Activated T-helper 1 cell treated with anti-CD3 and anti-CD28 coated beads, Interleukin-12 subunit alpha, Interleukin-12 subunit beta, Interleukin-2, Interleukin-4 antibody, amounts not matched to agents 30 ng/mL and 10 ng/mL and 1 ng/mL, durations not matched to agents 14 hours and 24 hours and 36 hours (primary cell): ENCODE measurements at regions of chr19 and their contacts with region 1.

Region 1: DNA sequence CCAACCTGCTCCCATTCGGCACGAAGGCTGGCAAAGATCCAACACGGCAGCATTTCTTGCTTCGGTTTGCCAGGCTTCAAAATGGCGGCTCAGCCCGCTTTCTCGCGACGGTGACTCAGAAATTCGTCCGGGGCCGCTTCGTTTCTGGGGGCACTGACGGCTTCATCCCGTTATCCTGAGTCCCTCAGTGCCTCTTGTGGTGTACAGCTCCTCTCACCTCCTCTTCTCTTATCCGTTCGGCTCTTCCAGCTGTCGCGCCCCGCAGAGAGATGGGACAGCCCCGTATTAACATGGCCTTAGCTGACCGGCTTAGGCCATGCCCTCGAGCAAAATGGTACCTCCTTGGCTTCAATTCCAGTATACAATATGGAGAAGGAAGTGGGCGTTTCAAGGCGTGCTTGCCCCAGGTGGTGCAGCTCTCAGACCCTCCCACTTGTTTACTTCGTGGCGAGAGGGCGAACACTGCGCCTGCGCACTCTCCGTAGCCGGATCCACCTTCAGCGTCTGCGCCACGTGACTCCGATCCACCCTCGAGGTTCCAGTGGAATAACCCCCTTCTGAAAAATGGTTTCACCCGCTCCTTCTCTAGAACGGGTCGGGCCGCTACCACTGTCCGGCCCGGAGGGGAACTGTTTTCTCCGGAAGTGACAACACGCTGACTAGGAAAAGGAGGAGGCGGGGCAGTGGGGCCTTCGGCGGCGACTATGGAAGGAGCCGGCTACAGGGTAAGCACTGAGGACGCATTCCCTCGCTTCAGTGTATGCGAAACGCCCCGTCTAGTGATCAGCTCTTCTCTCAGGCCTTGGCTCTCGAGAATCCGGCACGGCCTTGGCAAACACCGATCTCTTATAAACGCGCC is at the starts of genes AKT1S1 and TBC1D17:
- DNase-seq: peak; percentile 99
- H3K4me3 Mint-ChIP-seq: no peak within 1 kb of the TSS
- H3K27ac Mint-ChIP-seq: no peak within 1 kb of the TSS
- H3K4me1 Mint-ChIP-seq: peaks cover 30% of the 10 kb centered on the region
- H3K27me3 Mint-ChIP-seq: no peaks in the 10 kb centered on the region
- total RNA-seq, gene AKT1S1: 32.1 and 32.2 TPM in 2 replicates
- total RNA-seq, gene TBC1D17: 38.7 and 41.8 TPM in 2 replicates

Region 2: GRCh38 chr19:49676690-49677231 is 200.5 kb before region 1 on chr19:
- intact Hi-C with region 1: loop called (anchors 1 kb)
- DNase-seq: peak; percentile 98
- H3K4me3 Mint-ChIP-seq: peak overlapping the region; percentile 95
- H3K27ac Mint-ChIP-seq: peak overlapping the region; percentile 99
- H3K4me1 Mint-ChIP-seq: peaks cover 41% of the 10 kb centered on the region
- H3K27me3 Mint-ChIP-seq: no peaks in the 10 kb centered on the region

Region 3: DNA sequence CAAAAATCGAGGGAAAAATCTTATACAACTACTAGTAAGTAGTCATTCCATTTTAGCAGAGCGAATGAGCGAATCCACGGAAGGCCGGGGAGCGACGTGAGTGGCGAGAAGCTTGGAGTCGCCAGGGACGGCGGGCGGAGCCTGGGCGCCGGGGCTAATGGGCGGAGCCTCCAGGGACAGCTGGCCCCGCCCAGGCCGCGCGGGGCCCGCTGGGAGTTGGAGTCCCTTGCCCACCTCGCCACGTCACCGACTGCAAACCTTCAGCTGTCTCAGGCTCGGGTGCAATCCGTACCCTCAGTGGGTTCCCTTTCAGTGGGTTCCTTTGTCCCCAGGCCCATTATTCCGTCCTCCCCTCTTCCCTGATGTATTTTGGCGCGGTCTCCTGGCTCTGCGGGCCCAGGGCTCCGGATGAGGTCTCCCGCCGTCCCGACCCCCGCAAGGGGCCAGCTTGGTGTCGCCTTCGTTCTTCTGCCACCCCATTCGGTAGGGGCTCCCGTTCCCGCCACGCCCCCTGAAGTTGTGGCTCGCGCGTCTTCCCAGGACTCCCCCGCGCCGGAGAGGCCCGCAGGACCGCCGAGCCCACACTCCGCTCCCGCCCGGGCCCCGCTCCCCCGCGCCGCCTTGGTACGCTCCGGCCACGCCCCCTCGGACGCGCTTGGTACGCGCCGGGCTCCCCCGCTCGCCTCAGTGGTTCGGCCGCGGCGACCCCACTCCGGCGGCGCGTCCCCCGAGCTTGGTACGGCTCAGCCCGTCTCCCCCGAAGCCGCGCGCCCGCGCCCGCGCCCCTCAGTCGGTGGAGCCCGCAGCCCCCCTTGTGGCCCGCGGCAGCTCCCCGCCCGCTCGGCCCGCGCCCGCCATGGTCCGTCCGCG is 26.5 kb before region 1 on chr19 and contains the start of gene PTOV1:
- intact Hi-C with region 1: loop called (anchors 1 kb)
- DNase-seq: peak; percentile 88
- H3K4me3 Mint-ChIP-seq: peak within 1 kb of the TSS; percentile 89
- H3K27ac Mint-ChIP-seq: peak within 1 kb of the TSS; percentile 92
- H3K4me1 Mint-ChIP-seq: peaks cover 38% of the 10 kb centered on the region
- H3K27me3 Mint-ChIP-seq: peaks cover 5% of the 10 kb centered on the region
- total RNA-seq, gene PTOV1: 107 and 113 TPM in 2 replicates

Region 4: GRCh38 chr19:49862376-49863253 is 14.6 kb before region 1 on chr19:
- intact Hi-C with region 1: no loop called
- DNase-seq: no peak
- H3K4me3 Mint-ChIP-seq: peak overlapping the region; percentile 4
- H3K27ac Mint-ChIP-seq: no peak overlapping the region
- H3K4me1 Mint-ChIP-seq: peaks cover 20% of the 10 kb centered on the region
- H3K27me3 Mint-ChIP-seq: no peaks in the 10 kb centered on the region

Region 5: GRCh38 chr19:49911381-49912145 is 34.3 kb after region 1 on chr19:
- intact Hi-C with region 1: loop called (anchors 1 kb)
- DNase-seq: no peak
- H3K4me3 Mint-ChIP-seq: peak overlapping the region; percentile 75
- H3K27ac Mint-ChIP-seq: peak overlapping the region; percentile 96
- H3K4me1 Mint-ChIP-seq: peaks cover 63% of the 10 kb centered on the region
- H3K27me3 Mint-ChIP-seq: no peaks in the 10 kb centered on the region

Region 6: DNA sequence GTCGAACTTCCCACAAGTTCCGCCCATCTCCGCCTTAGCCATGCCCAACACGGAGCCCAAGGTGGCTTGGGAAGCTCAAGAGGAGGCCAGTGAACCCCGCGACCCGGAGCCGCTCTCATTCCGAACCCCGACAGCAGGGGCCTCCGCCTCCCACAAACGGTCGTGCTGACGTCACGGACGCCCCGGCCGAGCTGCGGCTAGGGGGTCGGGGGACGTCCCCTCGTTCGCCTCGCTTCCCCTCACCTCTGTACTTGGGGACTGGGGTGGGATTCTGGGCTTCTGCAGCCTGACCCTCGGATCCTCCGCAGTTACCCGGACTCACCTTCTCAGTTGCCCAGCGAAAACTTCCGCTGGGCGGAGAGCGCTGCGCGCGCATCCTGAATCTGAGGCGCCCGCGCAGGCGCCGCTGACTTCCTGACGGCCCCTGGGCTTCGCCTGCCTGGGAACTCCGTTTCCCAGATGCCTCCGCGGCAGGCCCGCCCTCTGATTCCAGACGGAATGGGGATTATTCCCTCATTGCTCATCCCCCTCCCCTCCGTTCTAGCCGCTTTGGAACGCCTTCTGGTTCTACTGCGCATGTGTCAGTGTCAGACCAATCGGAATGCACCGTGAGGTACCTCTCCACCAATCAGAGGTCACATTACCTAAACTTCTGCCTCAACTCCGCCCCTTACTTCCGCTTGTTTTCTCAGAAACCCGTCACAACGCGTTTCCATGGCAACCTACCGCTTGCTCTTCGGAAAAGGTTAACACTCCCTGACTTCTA is 148.0 kb after region 1 on chr19 and contains the start of gene VRK3:
- intact Hi-C with region 1: loop called (anchors 1 kb)
- DNase-seq: peak; percentile 99
- H3K4me3 Mint-ChIP-seq: peak within 1 kb of the TSS; percentile 93
- H3K27ac Mint-ChIP-seq: peak within 1 kb of the TSS; percentile 99
- H3K4me1 Mint-ChIP-seq: peaks cover 40% of the 10 kb centered on the region
- H3K27me3 Mint-ChIP-seq: peaks cover 6% of the 10 kb centered on the region
- total RNA-seq, gene VRK3: 66.7 and 69.4 TPM in 2 replicates